ENCODE measurements at regions of chr9 and their contacts with region 1.

Region 1: GRCh38 chr9:99868845-99869244 is 37.6 kb upstream of the STX17 start:
- DNase-seq: no peak
- H3K4me3 Mint-ChIP-seq: peak overlapping the region; percentile 11
- H3K27ac Mint-ChIP-seq: peak overlapping the region; percentile 51
- H3K4me1 Mint-ChIP-seq: peaks cover 51% of the 10 kb centered on the region
- H3K27me3 Mint-ChIP-seq: no peaks in the 10 kb centered on the region

Region 2: DNA sequence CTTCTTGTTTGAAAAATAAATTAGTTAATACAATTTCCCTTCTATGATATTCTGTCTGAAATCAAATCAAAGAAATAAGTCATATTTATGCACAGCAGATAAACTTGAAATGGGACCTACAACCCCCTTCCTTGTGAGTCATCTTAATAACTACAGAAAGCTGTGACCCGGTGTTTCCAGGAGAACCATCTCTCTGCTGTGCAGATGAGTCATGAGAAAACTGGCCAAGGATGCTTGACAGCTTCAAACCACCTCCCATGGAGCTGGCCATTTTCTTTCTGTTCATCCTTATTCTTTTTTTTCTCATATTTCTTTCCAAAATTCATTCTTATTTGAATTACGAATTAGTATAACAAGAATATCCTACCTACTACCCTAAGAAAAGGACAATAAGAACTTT is 90.5 kb before region 1 on chr9:
- intact Hi-C with region 1: no loop called
- DNase-seq: no peak
- H3K4me3 Mint-ChIP-seq: no peak overlapping the region
- H3K27ac Mint-ChIP-seq: no peak overlapping the region
- H3K4me1 Mint-ChIP-seq: peaks cover 16% of the 10 kb centered on the region
- H3K27me3 Mint-ChIP-seq: peaks cover 13% of the 10 kb centered on the region

Region 3: DNA sequence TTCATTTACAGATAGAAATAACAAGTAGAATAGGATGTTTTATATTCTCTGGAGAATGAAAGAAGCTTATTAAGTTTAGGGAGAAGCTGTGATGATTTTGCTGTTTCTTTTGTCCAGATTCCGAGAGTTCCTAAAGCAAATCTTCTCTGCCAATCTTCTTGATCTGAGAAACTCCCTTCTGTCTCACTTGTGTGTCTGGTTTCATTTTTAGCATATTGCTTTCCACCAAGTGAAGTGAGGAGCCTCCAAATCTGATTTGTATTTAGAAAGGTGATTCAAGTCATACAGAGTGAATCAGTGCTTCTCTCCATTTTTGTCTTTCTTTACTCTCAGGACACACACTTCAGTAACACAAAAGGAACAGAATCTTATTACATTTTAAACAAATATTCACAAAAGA is 86.0 kb after region 1 on chr9:
- intact Hi-C with region 1: loop called (anchors 5 kb)
- DNase-seq: no peak
- H3K4me3 Mint-ChIP-seq: no peak overlapping the region
- H3K27ac Mint-ChIP-seq: no peak overlapping the region
- H3K4me1 Mint-ChIP-seq: peaks cover 12% of the 10 kb centered on the region
- H3K27me3 Mint-ChIP-seq: no peaks in the 10 kb centered on the region

Region 4: DNA sequence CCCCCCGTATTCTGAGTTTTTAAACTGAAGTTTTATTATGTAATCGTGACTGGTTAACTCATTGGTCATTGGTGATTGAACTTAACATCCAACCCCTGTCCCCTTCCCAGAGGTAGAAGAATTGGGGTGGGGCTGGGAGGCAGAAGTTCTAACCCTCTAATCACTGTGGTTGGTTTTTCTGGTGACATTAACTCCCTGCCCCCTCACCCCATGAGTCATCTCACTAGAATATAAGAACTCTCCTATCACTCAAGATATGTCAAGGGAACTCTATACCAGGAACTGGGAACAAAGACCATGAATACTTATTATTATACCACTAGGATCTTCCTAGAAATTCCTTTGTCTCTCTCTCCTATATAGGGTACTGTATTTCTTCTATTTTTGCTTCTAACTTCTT is 656.7 kb after region 1 on chr9:
- intact Hi-C with region 1: no loop called
- DNase-seq: no peak
- H3K4me3 Mint-ChIP-seq: no peak overlapping the region
- H3K27ac Mint-ChIP-seq: no peak overlapping the region
- H3K4me1 Mint-ChIP-seq: peaks cover 13% of the 10 kb centered on the region
- H3K27me3 Mint-ChIP-seq: peaks cover 2% of the 10 kb centered on the region